ENCODE measurements at regions of chr20 and their contacts with region 1.

Region 1: GRCh38 chr20:20731945-20732296 is 19.5 kb upstream of the RALGAPA2 start:
- DNase-seq: peak; percentile 45 to 77
- ATAC-seq: peak; percentile 97 to 98
- H3K4me3 ChIP-seq: no peak overlapping the region
- H3K27ac ChIP-seq: peak overlapping the region; percentile 87 to 92 (median 90)
- H3K4me1 ChIP-seq: peaks cover 32 to 59% of the 10 kb centered on the region in 2 donors
- H3K27me3 ChIP-seq: no peaks in the 10 kb centered on the region
- CTCF ChIP-seq: no peak
- POLR2A ChIP-seq: peak in 1 of 2 donors; percentile 15

Region 2: DNA sequence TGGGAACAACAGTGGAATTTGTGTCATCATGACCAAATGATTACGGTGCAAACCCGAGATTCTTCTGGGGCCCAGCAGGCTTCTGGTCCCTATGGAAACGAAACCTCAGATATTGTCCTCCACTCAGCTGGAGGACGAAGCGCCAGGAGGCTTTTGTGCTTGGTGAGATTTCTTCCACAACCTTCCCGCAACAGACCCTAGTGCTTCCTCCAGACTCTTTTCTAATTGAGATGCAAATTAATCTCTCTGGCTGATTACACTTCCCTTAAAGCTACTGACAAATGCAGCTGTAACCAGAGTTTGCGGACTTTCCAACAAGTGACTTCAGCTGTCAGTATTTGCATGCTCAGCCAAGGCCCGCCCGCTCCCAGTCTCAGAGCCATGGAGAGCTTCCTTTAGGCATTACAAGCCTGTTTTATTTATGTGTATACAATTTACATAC is 268.0 kb before region 1 on chr20:
- in situ Hi-C with region 1: no loop called
- intact Hi-C with region 1: no loop called
- DNase-seq: no peak
- ATAC-seq: no peak
- H3K4me3 ChIP-seq: no peak overlapping the region
- H3K27ac ChIP-seq: no peak overlapping the region
- H3K4me1 ChIP-seq: no peaks in the 10 kb centered on the region
- H3K27me3 ChIP-seq: no peaks in the 10 kb centered on the region
- CTCF ChIP-seq: no peak
- POLR2A ChIP-seq: no peak

Region 3: GRCh38 chr20:20699144-20699543 is 32.8 kb before region 1 on chr20:
- in situ Hi-C with region 1: no loop called
- intact Hi-C with region 1: no loop called
- DNase-seq: no peak
- ATAC-seq: no peak
- H3K4me3 ChIP-seq: no peak overlapping the region
- H3K27ac ChIP-seq: peak overlapping the region in 2 of 4 donors; percentile 67 to 70
- H3K4me1 ChIP-seq: peaks cover 64 to 81% of the 10 kb centered on the region in 2 donors
- H3K27me3 ChIP-seq: no peaks in the 10 kb centered on the region
- CTCF ChIP-seq: no peak
- POLR2A ChIP-seq: no peak

Region 4: DNA sequence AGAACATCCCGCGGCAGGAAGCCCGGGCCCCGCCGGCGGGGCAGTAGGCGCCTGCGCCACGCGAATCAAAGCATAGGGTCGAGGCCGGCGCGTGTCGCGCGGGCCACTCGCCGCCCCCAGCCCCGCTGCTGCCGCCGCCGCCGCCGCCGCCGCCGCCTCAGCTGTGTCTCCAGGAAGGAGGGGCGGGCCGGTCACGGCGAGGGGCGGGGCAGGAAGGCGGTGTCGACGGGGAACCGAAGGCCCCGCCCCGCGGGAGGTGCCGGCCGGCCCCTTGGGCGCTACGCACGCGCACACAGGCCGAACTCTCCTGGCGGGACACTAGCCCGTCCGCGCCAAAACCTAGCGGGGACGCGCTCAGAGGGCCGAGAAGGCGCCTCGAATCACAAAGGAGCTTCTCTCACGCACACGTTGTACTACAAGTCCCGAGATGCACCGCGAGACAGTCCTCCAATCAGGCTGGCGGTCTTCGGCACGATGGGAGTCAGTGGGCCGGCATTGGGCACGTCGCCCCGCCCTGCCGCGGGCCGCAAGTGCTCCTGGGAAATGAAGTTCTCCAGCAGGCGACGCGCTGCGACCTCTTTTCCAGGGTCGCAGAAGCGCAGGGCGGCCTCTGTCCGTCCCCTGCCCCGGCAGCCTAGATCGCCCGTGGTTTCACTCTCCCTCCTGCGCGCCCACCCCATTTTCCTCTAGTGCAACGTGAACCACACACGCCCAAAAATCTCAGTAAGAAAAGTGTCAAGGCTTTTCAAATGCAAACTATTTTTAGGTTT is 19.3 kb before region 1 on chr20 and contains the start of gene RALGAPA2:
- in situ Hi-C with region 1: no loop called
- intact Hi-C with region 1: loop called (anchors 1 kb)
- DNase-seq: peak; percentile 97 to 99
- ATAC-seq: peak; percentile 86 to 87
- H3K4me3 ChIP-seq: peak within 1 kb of the TSS; percentile 67 to 87 (median 82)
- H3K27ac ChIP-seq: peak within 1 kb of the TSS; percentile 94 to 98 (median 97)
- H3K4me1 ChIP-seq: peaks cover 38 to 47% of the 10 kb centered on the region in 2 donors
- H3K27me3 ChIP-seq: no peaks in the 10 kb centered on the region
- CTCF ChIP-seq: peak in 1 of 5 experiments; percentile 30
- POLR2A ChIP-seq: peak; percentile 99
- total RNA-seq, gene RALGAPA2: 43.2 to 56.9 (median 52.0) TPM

Measured in gastrocnemius medialis (tissue), 4 donors.